Activated CD4-positive, alpha-beta T cell treated with anti-CD3 and anti-CD28 coated beads, Interleukin-2, amount 10 ng/mL, durations not matched to agents 24 days and 14 days (primary cell): ENCODE measurements at regions of chr2 and their contacts with region 1.

Region 1: GRCh38 chr2:207121784-207122183 is 44.0 kb downstream of the KLF7 start:
- DNase-seq: no peak
- H3K4me3 Mint-ChIP-seq: no peak overlapping the region
- H3K27ac Mint-ChIP-seq: no peak overlapping the region
- H3K4me1 Mint-ChIP-seq: peaks cover 38% of the 10 kb centered on the region
- H3K27me3 Mint-ChIP-seq: no peaks in the 10 kb centered on the region

Region 2: DNA sequence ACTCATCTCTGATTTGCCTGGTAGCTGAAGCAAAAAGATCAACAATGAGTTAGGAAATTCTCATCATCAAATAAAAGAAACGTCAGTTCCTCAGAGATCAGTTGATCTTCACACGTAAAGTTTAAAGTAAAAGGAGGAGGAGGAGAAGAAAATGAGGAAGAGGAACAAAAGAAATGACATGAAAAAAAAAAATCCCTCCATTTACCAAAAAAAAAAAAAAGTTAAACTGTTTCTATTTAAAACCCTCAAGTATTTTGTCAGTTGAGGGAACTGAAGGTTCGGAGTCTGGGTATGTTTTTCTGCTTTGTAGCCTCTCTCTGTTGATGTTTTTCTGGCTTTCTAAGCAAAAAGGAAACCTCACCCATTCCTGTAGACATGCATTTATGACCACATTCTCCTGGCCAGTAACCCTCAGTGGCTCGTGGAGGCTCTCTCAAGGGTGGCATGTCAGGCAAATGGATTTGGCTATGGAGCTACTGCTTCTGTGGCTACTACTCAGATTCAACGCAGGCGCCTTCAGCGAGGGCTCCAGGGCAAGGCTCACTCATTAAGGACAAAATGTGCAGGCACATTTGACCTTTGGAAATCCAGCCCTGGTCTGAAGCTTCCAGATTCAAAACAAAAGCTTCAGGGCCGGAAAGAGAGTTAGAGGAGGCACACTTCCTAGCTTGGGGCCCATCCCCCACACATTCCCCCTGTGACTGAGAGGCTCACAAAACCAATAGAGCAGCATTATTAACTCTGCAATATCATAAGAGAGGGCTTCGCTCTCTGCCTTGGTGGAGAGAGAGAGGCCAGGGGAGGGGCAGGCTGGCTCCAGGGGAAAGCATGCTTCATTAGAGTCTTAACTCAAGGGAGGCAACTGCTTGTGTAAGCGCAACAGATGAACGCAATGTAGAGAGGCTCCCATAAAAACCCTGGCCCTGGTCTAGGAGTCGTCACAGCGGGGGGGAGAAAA is 21.7 kb after region 1 on chr2:
- intact Hi-C with region 1: loop called (anchors 2 kb)
- DNase-seq: peak; percentile 88
- H3K4me3 Mint-ChIP-seq: peak overlapping the region; percentile 82
- H3K27ac Mint-ChIP-seq: peak overlapping the region; percentile 81
- H3K4me1 Mint-ChIP-seq: peaks cover 56% of the 10 kb centered on the region
- H3K27me3 Mint-ChIP-seq: peaks cover 2% of the 10 kb centered on the region

Region 3: DNA sequence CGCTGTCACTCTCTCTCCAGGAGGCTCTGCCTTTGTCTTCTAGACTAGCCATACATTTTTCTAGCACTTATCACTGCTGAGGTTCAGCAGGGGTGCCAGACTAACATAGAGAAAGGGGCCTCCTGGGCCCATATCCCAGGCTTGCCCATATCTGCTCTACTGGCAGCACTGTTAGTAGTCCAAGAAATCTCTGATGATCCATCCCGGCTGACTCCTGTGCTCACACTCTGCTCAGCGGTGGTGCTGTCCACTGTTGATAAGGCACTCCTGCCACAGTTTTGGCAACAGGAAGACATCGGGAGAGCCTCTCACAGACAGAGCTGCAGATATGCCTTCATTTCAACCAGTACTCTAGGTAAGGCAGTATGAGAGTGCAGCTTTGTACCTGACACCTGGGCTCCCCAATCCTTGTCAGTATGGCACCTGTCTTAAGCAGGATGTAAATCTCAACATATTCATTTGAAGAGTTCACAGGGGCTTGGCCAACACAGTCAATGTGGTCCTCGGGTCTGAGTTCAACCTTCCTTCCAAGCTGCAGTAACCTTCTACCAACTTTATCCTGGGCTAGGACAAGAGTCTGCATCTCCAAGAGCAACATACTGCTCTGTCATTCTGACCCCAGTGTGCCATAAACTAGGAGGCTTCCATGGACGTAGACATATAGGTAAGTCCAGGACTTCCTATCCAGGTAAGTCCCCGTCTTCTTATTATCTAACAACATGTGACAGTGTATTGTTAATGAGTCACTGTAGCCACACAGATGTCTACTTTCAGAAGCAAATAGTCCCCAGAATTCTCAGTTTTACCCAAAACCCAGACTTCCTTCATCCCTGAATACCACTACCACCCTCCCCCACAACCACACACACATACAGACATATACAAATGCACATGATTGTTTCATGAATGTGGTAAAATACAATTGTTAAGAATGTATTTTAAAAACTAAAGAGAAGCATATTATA is 27.7 kb after region 1 on chr2:
- intact Hi-C with region 1: loop called (anchors 1 kb)
- DNase-seq: no peak
- H3K4me3 Mint-ChIP-seq: no peak overlapping the region
- H3K27ac Mint-ChIP-seq: no peak overlapping the region
- H3K4me1 Mint-ChIP-seq: peaks cover 54% of the 10 kb centered on the region
- H3K27me3 Mint-ChIP-seq: peaks cover 4% of the 10 kb centered on the region